ENCODE measurements at regions of chr6 and their contacts with region 1.

Region 1: GRCh38 chr6:166999145-166999883 is at the start of gene CEP43:
- DNase-seq: peak; percentile 95
- H3K4me3 ChIP-seq: peak within 1 kb of the TSS; percentile 54 to 100 (median 99)
- H3K27ac ChIP-seq: peak within 1 kb of the TSS; percentile 82 to 91 (median 85)
- H3K4me1 ChIP-seq: peaks cover 7 to 21% (median 20%) of the 10 kb centered on the region in 4 donors
- H3K27me3 ChIP-seq: no peaks in the 10 kb centered on the region
- CTCF ChIP-seq: peak in 1 of 5 experiments; percentile 8
- EP300 ChIP-seq: no peak
- POLR2A ChIP-seq: peak; percentile 52
- total RNA-seq, gene CEP43: 3.6 to 31.0 (median 14.3) TPM

Region 2: DNA sequence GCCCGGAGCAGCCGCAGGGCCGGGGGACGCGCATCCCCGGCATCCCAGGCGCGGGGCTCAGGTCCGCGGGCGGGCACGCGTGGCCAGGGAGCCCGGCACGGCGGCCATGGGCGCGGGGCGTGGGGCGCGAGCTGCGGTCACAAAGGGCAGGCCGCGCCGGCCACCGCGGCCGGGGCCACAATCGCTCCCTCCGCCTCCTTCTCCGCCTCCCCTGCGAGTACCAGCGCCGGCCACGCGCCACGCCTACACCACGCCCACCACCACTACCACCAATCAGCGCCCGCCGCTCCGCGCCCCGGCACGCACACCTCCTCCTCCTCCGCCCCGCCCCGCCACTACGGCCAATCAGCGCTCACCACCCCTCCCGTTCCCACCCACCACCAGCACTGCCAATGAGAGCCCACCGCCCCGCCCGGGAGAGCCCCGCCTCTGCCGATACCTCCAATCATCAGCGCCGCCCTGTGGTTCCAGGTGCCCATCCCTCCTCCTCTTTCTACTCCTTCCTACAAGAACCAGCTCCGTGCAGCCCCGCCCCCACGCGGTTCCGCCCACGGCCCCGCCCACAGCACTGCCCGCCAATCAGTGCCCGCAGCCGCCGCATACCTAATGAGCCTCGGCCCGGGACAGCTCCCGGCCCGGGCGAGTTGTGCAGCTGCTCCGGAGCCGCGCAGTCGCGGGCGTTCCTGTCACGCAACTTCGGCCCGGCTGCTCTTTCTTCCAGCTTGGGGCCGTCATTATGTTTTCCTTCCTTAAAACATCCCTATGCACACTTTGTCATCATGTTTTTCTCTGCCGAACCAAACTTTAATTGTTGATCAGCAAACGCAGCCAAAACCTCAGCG is 372.1 kb before region 1 on chr6 and contains the start of gene RPS6KA2:
- in situ Hi-C with region 1: loop called in 1 of 4 experiments (anchors 25 kb)
- intact Hi-C with region 1: no loop called
- DNase-seq: peak; percentile 100
- H3K4me3 ChIP-seq: peak within 1 kb of the TSS; percentile 64 to 85 (median 70)
- H3K27ac ChIP-seq: peak within 1 kb of the TSS; percentile 94 to 98 (median 96)
- H3K4me1 ChIP-seq: peaks cover 6 to 23% (median 13%) of the 10 kb centered on the region in 4 donors
- H3K27me3 ChIP-seq: peaks cover 9% of the 10 kb centered on the region
- CTCF ChIP-seq: no peak
- EP300 ChIP-seq: no peak
- POLR2A ChIP-seq: peak; percentile 80
- total RNA-seq, gene RPS6KA2: 9.6 to 41.1 (median 15.4) TPM

Region 3: DNA sequence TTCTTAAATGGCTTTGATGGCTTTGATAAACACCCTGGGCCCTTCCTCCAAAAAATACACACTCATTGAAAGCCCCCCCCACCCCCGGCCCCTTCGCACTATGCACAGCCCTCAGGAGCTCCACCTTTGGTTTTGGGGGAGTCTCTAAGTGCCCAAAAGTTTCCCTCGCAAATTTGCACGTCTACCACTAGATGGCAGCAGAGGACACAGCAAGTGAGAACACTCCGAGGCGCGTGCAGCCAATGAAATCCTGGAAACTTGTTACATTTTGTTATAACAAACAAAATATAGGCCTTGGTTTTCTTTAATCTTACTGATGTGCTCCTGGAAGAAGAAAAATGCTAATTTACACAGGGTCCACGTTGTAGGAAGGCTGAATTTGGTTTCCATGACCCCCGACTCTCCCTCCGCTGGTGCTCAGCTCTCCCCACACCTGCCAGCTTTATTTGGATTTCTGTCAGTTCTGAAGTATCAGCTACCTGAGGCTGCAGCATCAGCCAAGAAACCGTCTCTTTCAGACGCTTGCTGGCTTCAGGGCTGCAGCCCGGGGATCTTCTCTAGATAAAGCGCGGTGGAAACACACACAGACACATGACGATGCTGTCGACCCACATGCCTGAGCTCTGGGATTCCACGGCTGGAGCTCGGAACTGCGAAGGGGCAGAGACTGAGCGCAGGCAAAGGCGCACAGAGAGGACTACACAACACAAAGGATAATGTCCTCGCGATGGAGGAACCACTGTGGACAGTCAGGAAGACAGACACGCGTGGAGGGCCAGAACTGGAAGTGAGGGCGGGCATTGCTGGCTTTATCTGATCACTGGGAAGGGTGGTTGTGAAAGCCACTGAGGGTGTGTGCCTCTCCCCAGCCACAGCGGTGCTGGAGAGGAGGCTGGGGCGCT is 223.9 kb before region 1 on chr6:
- in situ Hi-C with region 1: loop called in 3 of 4 experiments (anchors 25 kb)
- intact Hi-C with region 1: no loop called
- DNase-seq: peak; percentile 49
- H3K4me3 ChIP-seq: no peak overlapping the region
- H3K27ac ChIP-seq: no peak overlapping the region
- H3K4me1 ChIP-seq: no peaks in the 10 kb centered on the region
- H3K27me3 ChIP-seq: peaks cover 17% of the 10 kb centered on the region
- CTCF ChIP-seq: peak; percentile 70 to 89 (median 83)
- EP300 ChIP-seq: no peak
- POLR2A ChIP-seq: no peak

Region 4: GRCh38 chr6:167130008-167130677 is 130.8 kb after region 1 on chr6:
- in situ Hi-C with region 1: loop called in 2 of 4 experiments (anchors 10 to 25 kb)
- intact Hi-C with region 1: no loop called
- DNase-seq: no peak
- H3K4me3 ChIP-seq: no peak overlapping the region
- H3K27ac ChIP-seq: peak overlapping the region; percentile 9 to 57 (median 31)
- H3K4me1 ChIP-seq: no peaks in the 10 kb centered on the region
- H3K27me3 ChIP-seq: no peaks in the 10 kb centered on the region
- CTCF ChIP-seq: no peak
- EP300 ChIP-seq: no peak
- POLR2A ChIP-seq: no peak

Measured in transverse colon (tissue), 4 donors.